Naive thymus-derived CD4-positive, alpha-beta T cell (primary cell): ENCODE measurements at regions of chr17 and their contacts with region 1.

Region 1: GRCh38 chr17:7466639-7467341 is 12.6 kb downstream of the ZBTB4 start:
- DNase-seq: no peak
- ATAC-seq: peak; percentile 72
- H3K4me3 ChIP-seq: no peak overlapping the region
- H3K4me3 Mint-ChIP-seq: peak overlapping the region in 1 of 10 donors; percentile 51
- H3K27ac ChIP-seq: no peak overlapping the region
- H3K27ac Mint-ChIP-seq: peak overlapping the region in 5 of 9 donors; percentile 26 to 49 (median 33)
- H3K4me1 ChIP-seq: peaks cover 0 to under 1% of the 10 kb centered on the region in 2 donors
- H3K4me1 Mint-ChIP-seq: peaks cover 6 to 25% (median 17%) of the 10 kb centered on the region in 7 donors
- H3K27me3 ChIP-seq: no peaks in the 10 kb centered on the region
- H3K27me3 Mint-ChIP-seq: no peaks in the 10 kb centered on the region

Region 2: DNA sequence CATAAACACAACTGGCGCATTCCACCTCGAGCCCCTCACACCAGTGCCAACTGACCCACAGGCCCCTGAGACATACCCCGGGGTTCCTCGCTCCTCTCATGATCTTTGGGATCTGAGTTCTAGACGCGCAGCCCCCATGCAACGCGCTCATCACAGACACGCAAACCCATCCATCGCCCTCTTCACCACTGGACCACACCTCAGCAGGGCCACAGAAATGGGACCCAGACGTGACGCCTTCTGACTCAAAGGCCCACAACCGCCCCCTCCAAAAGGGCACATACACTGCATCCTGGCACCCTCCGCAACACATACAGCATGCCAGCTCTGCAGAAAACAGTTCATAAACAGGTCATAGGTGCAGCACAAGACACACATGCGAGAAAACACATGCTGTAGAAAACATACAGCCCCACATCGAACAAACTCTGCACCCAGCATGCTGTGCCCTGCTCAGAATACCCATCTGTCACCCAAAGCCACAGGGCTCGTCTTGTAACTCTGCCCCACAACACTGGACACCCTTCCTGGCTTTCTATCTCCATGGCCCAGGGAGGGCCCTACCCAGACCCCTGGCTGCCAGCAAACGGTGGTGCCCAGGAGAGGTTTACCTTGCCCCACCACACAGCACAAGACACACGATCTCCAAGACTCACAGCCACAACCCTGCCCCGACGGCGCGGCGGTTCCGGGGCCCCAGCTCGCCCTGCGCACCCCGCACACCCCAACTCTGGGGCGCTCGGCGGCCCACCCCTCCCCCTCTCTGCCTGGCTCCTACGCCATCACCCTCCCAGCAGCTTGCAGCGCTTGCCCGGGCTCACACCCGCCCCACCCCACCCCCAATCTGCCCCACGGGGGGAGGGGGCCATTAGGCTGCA is 11.7 kb after region 1 on chr17:
- CTCF ChIA-PET with region 1: interaction called, 4 read pairs
- POLR2A ChIA-PET with region 1: interaction called, 199 read pairs
- intact Hi-C with region 1: no loop called
- DNase-seq: peak; percentile 53 to 83 (median 73)
- ATAC-seq: peak; percentile 56
- H3K4me3 ChIP-seq: peak overlapping the region; percentile 75
- H3K4me3 Mint-ChIP-seq: peak overlapping the region; percentile 90 to 99 (median 97)
- H3K27ac ChIP-seq: peak overlapping the region; percentile 100
- H3K27ac Mint-ChIP-seq: peak overlapping the region; percentile 90 to 99 (median 95)
- H3K4me1 ChIP-seq: peaks cover 26 to 49% of the 10 kb centered on the region in 2 donors
- H3K4me1 Mint-ChIP-seq: peaks cover 51 to 82% (median 70%) of the 10 kb centered on the region in 7 donors
- H3K27me3 ChIP-seq: no peaks in the 10 kb centered on the region
- H3K27me3 Mint-ChIP-seq: no peaks in the 10 kb centered on the region